MCF 10A (cell line): ENCODE measurements at regions of chr3 and their contacts with region 1.

Region 1: GRCh38 chr3:111961461-111962164 is 17.2 kb upstream of the ABHD10 start:
- DNase-seq: no peak
- H3K4me3 Mint-ChIP-seq: no peak overlapping the region
- H3K27ac Mint-ChIP-seq: no peak overlapping the region
- H3K4me1 Mint-ChIP-seq: peaks cover 5% of the 10 kb centered on the region
- H3K27me3 Mint-ChIP-seq: no peaks in the 10 kb centered on the region
- CTCF ChIP-seq: no peak

Region 2: GRCh38 chr3:111895079-111895478 is 66.5 kb before region 1 on chr3:
- CTCF ChIA-PET with region 1: interaction called, 10 read pairs
- POLR2A ChIA-PET with region 1: interaction called, 5 read pairs
- intact Hi-C with region 1: no loop called
- DNase-seq: peak; percentile 63
- H3K4me3 Mint-ChIP-seq: no peak overlapping the region
- H3K27ac Mint-ChIP-seq: peak overlapping the region; percentile 69
- H3K4me1 Mint-ChIP-seq: peaks cover 14% of the 10 kb centered on the region
- H3K27me3 Mint-ChIP-seq: no peaks in the 10 kb centered on the region
- CTCF ChIP-seq: peak; percentile 46

Region 3: GRCh38 chr3:112619295-112619694 is 657.7 kb after region 1 on chr3:
- CTCF ChIA-PET with region 1: no interaction called
- POLR2A ChIA-PET with region 1: no interaction called
- intact Hi-C with region 1: no loop called
- DNase-seq: peak; percentile 42
- H3K4me3 Mint-ChIP-seq: no peak overlapping the region
- H3K27ac Mint-ChIP-seq: no peak overlapping the region
- H3K4me1 Mint-ChIP-seq: no peaks in the 10 kb centered on the region
- H3K27me3 Mint-ChIP-seq: no peaks in the 10 kb centered on the region
- CTCF ChIP-seq: no peak

Region 4: GRCh38 chr3:112767177-112767576 is 805.6 kb after region 1 on chr3:
- CTCF ChIA-PET with region 1: no interaction called
- POLR2A ChIA-PET with region 1: no interaction called
- intact Hi-C with region 1: no loop called
- DNase-seq: no peak
- H3K4me3 Mint-ChIP-seq: no peak overlapping the region
- H3K27ac Mint-ChIP-seq: no peak overlapping the region
- H3K4me1 Mint-ChIP-seq: no peaks in the 10 kb centered on the region
- H3K27me3 Mint-ChIP-seq: no peaks in the 10 kb centered on the region
- CTCF ChIP-seq: no peak